ENCODE measurements at regions of chr6 and their contacts with region 1.

Region 1: DNA sequence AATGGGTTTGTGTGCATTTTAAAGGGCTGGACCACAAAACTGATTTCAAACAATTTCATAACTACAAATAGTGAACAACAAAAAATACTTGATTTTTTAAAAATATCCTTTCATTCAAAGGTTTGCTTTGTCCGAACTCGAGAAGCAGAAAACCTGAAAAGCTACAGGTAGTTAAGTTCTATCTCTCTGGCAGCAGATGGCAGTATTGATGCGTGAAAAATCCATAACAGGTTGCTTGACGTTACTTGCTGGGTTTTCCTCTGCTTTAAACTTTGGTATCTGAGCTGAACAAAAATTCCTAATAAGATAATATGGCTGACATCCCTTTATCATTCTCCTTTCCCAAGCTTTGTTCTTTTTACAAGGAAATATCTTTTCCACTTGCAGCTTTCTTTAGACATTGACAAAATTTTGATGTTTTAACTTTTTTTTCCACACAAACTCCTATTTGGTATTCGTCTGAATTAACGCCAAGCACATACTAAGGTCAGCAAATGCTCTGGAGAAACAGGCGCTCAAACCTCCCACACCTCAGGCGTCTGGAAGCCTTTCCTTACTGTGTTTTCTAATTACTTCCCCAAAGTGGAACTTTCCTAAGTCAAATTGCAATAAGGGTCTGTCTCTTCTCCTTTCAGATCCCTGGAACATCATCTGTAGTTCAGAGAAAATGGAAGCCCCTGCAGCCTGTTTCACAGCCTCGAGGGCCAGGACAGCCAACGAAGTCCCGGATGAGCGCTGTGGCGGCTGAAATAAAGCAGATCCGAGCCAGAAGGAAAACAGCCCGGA is 50.3 kb upstream of the GFRAL start:
- DNase-seq: peak; percentile 18
- H3K4me3 Mint-ChIP-seq: no peak overlapping the region
- H3K27ac Mint-ChIP-seq: no peak overlapping the region
- H3K4me1 Mint-ChIP-seq: no peaks in the 10 kb centered on the region
- H3K27me3 Mint-ChIP-seq: no peaks in the 10 kb centered on the region

Region 2: GRCh38 chr6:55212156-55212555 is 64.8 kb before region 1 on chr6:
- CTCF ChIA-PET with region 1: no interaction called
- intact Hi-C with region 1: no loop called
- DNase-seq: no peak
- H3K4me3 Mint-ChIP-seq: no peak overlapping the region
- H3K27ac Mint-ChIP-seq: no peak overlapping the region
- H3K4me1 Mint-ChIP-seq: no peaks in the 10 kb centered on the region
- H3K27me3 Mint-ChIP-seq: no peaks in the 10 kb centered on the region

Region 3: GRCh38 chr6:55886185-55886836 is 609.4 kb after region 1 on chr6:
- CTCF ChIA-PET with region 1: no interaction called
- intact Hi-C with region 1: loop called (anchors 2 kb)
- DNase-seq: no peak
- H3K4me3 Mint-ChIP-seq: no peak overlapping the region
- H3K27ac Mint-ChIP-seq: no peak overlapping the region
- H3K4me1 Mint-ChIP-seq: no peaks in the 10 kb centered on the region
- H3K27me3 Mint-ChIP-seq: no peaks in the 10 kb centered on the region

Region 4: GRCh38 chr6:55953335-55953734 is 676.4 kb after region 1 on chr6:
- CTCF ChIA-PET with region 1: interaction called, 3 read pairs
- intact Hi-C with region 1: loop called (anchors 10 kb)
- DNase-seq: no peak
- H3K4me3 Mint-ChIP-seq: no peak overlapping the region
- H3K27ac Mint-ChIP-seq: no peak overlapping the region
- H3K4me1 Mint-ChIP-seq: no peaks in the 10 kb centered on the region
- H3K27me3 Mint-ChIP-seq: no peaks in the 10 kb centered on the region

Region 5: DNA sequence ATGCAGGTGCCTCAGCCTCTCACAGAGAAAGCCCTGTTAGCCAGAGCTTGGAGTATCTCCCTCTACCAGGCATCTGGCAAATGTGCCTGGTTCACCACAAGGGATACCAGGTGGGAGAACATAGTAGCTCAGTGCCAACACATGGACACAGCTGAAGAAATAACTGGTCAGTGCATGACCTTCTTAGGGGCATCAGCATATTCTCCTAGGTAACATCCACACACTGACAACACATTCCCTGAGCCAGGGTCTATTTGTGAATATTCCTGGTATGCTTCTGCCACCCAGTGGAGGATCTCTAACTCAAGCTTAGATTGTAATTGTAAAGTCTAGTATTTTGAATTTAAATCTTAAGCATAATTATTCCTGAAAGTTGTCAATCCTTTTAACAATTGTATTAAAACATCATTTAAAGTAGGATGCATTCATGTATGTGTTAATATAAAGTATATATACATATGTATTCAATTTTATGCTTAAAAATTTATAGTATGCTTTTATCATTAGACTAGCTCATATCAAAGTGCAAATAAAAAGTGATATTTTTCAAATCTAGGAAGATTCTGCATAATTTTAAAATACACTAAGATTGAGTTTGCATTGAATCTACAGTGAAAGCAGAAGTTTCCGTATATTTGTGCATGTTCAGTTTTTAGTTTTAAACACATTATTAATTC is 1015.7 kb after region 1 on chr6:
- CTCF ChIA-PET with region 1: no interaction called
- intact Hi-C with region 1: loop called (anchors 5 kb)
- DNase-seq: peak; percentile 11
- H3K4me3 Mint-ChIP-seq: no peak overlapping the region
- H3K27ac Mint-ChIP-seq: no peak overlapping the region
- H3K4me1 Mint-ChIP-seq: no peaks in the 10 kb centered on the region
- H3K27me3 Mint-ChIP-seq: no peaks in the 10 kb centered on the region

Region 6: DNA sequence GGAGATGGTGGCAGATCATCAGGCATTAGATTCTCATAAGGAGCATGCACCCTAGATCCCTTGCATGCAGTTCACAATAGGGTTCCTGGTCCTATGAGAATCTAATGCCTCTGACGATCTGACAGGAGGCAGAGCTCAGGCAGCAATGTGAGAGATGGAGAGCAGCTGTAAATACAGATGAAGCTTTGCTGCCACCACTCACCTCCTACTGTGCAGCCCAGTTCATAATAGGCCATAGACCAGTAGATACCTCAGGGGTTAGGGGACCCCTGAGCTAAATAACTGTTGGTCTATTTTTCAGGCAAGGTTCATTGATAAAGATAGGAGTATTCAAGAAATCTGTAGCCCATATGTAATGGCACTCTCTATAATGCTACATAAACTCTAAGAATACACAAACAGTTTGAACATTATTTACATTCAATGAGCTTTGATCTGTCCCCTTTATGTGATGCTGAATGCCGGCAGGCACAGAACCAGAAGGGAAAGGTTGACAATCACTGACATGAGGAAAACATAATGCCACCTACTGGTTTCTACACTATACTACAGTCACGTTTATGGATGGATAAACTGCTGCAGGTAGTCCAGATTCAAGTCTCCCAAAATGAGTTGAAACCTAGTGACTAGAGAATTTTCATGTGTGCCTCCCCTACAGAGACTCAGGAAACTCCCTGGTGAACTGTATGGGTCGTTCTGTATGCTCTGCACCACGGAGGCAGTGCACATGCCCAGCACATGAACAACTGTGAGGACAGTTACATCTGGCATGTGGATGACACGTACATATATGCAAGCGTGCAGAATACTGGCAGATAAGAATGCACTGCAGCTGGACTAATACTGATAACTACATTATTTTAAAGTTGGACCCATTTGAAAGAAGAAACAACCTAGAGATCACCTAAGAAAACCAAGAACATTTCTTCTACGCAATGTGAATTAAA is 1293.7 kb after region 1 on chr6:
- CTCF ChIA-PET with region 1: no interaction called
- intact Hi-C with region 1: loop called (anchors 2 kb)
- DNase-seq: no peak
- H3K4me3 Mint-ChIP-seq: no peak overlapping the region
- H3K27ac Mint-ChIP-seq: no peak overlapping the region
- H3K4me1 Mint-ChIP-seq: no peaks in the 10 kb centered on the region
- H3K27me3 Mint-ChIP-seq: no peaks in the 10 kb centered on the region

Measured in activated naive CD4-positive, alpha-beta T cell treated with anti-CD3 and anti-CD28 coated beads for 36 hours (primary cell).